ENCODE measurements at regions of chr9 and their contacts with region 1.

Region 1: GRCh38 chr9:89000973-89001916 is 10.0 kb downstream of the S1PR3 start:
- DNase-seq: no peak
- H3K4me3 ChIP-seq: no peak overlapping the region
- H3K27me3 ChIP-seq: no peaks in the 10 kb centered on the region
- CTCF ChIP-seq: peak; percentile 75

Region 2: DNA sequence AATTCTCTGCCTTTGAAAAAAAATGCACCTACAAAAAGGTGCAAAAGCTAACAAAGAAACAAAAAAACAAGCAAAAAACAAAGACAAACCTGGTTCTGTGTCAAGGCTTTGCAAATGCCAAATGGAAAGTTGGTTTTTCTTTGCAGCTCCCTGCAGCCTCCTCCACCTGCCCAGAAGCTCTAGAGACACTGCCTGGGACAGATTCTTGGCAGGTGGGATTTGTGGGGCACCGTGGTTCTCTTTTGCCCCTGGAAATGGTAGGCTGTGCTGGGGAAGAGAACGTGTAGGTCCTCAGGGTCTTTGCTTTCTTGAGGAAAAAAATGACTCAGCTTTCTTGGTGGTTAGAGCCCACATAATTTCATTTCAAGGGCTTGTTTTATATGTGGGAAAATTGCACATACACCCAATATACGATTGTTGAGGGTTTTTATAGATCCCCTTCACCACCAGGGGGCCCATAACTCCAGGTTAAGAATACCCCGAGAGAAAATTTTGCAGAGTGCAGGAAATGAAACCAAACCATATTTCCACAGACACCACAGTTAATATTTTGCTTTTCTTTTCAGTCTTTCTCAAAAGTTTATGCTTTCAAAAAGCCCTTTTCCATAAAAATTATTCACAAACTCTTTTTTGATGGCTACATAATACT is 407.6 kb before region 1 on chr9:
- CTCF ChIA-PET with region 1: interaction called, 12 read pairs
- POLR2A ChIA-PET with region 1: interaction called, 3 read pairs
- DNase-seq: no peak
- H3K4me3 ChIP-seq: no peak overlapping the region
- H3K27me3 ChIP-seq: no peaks in the 10 kb centered on the region
- CTCF ChIP-seq: peak; percentile 66

Region 3: DNA sequence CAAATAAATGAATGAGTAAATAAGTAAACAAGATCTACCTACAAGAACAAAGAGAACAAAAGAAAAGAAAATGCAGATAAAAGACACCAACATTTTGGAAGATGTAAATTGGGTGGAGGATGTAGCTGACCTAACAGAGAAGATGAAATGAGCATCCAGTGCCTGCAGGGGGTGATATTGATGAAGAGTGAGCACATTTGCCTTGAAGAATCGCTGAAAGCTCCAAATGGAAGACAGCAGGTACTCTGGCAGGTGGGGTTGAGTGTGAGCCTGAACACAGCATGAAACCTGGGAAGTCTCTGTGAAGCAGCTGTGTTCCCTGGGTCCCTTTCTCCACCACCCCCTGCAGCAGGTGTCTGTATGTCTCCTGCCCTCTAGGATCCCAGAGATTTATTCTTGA is 340.6 kb before region 1 on chr9:
- CTCF ChIA-PET with region 1: interaction called, 13 read pairs
- POLR2A ChIA-PET with region 1: no interaction called
- DNase-seq: no peak
- H3K4me3 ChIP-seq: no peak overlapping the region
- H3K27me3 ChIP-seq: no peaks in the 10 kb centered on the region
- CTCF ChIP-seq: peak; percentile 64